CD4-positive, alpha-beta T cell (primary cell): ENCODE measurements at regions of chr6 and their contacts with region 1.

Region 1: GRCh38 chr6:137589067-137589848 is 95.1 kb upstream of the OLIG3 start:
- DNase-seq: peak; percentile 9 to 87 (median 37)
- ATAC-seq: peak; percentile 100
- H3K4me3 ChIP-seq: no peak overlapping the region
- H3K4me3 Mint-ChIP-seq: no peak overlapping the region
- H3K27ac ChIP-seq: no peak overlapping the region
- H3K27ac Mint-ChIP-seq: no peak overlapping the region
- H3K4me1 ChIP-seq: peaks cover 10% of the 10 kb centered on the region
- H3K4me1 Mint-ChIP-seq: peaks cover 7% of the 10 kb centered on the region
- H3K27me3 ChIP-seq: peaks cover 0 to 5% of the 10 kb centered on the region in 2 experiments
- H3K27me3 Mint-ChIP-seq: peaks cover 28% of the 10 kb centered on the region
- CTCF ChIP-seq: peak; percentile 67

Region 2: DNA sequence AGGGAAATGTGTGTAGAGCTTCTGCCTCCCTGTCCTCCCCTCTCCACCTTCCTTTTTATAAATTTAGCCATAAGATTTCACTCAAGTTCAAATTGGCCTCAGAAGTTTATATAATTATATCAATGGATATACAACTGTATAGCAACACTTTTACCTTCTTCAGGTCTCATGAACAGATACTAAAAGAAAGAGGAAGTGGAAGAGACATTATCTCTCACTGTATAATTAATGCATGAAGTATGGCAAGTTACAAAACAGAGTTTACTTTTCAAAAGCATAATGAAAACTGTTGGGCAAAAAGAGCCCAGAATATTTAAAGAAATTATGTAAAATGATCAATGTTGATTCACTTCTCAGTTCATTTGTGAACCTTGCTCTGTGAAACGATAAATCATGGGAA is 1638.1 kb before region 1 on chr6:
- CTCF ChIA-PET with region 1: no interaction called
- POLR2A ChIA-PET with region 1: no interaction called
- intact Hi-C with region 1: no loop called
- DNase-seq: no peak
- ATAC-seq: no peak
- H3K4me3 ChIP-seq: no peak overlapping the region
- H3K4me3 Mint-ChIP-seq: no peak overlapping the region
- H3K27ac ChIP-seq: no peak overlapping the region
- H3K27ac Mint-ChIP-seq: no peak overlapping the region
- H3K4me1 ChIP-seq: no peaks in the 10 kb centered on the region
- H3K4me1 Mint-ChIP-seq: no peaks in the 10 kb centered on the region
- H3K27me3 ChIP-seq: no peaks in the 10 kb centered on the region
- H3K27me3 Mint-ChIP-seq: no peaks in the 10 kb centered on the region
- CTCF ChIP-seq: no peak

Region 3: DNA sequence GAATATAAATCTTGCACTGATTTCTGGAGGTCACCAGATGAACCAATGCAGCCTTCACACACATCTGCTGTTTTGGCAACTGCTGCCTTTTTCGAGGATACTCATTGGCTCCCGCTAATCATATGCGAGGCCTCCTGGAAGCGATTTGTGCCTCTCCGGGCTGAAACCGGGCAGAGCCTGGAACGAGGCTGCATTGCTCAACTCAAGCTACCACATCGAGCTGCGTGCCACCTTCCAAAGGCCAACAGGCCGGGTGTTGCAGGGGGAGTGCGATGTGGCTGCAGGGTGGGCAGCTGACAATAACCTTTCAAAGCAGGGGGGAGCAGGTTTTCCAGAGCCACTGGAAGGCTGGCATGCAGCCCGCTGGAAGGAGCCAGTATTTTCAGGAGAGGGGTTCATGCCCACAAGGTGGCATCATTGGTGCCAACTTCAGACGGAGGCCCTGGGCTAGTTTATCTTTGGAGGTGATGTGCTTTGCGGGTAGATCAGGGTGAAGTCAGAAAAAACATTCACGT is 247.5 kb before region 1 on chr6:
- CTCF ChIA-PET with region 1: no interaction called
- POLR2A ChIA-PET with region 1: no interaction called
- intact Hi-C with region 1: loop called (anchors 2 to 5 kb)
- DNase-seq: peak; percentile 29 to 80 (median 50)
- ATAC-seq: peak; percentile 39
- H3K4me3 ChIP-seq: no peak overlapping the region
- H3K4me3 Mint-ChIP-seq: peak overlapping the region; percentile 81
- H3K27ac ChIP-seq: no peak overlapping the region
- H3K27ac Mint-ChIP-seq: no peak overlapping the region
- H3K4me1 ChIP-seq: peaks cover 12% of the 10 kb centered on the region
- H3K4me1 Mint-ChIP-seq: peaks cover 18% of the 10 kb centered on the region
- H3K27me3 ChIP-seq: peaks cover 0 to 6% of the 10 kb centered on the region in 2 experiments
- H3K27me3 Mint-ChIP-seq: peaks cover 9% of the 10 kb centered on the region
- CTCF ChIP-seq: peak; percentile 72

Region 4: DNA sequence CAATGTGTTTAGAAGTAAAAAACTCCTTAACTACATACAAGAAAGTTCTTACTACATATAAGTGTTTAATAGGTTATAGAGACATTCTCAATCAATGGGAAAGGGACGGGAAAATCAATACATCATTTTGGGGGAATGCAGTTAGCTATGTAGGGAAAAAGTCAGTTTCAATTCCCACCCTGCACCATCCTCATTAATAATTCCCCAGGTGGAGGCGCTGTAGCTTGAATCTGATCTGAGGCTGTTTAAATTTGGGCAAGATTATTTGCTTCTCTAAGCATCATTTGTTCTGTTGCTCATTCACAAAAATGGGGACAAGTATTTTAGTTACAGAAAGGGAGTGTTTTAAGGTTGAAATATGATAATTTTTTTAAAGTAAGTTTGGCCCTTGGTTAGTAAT is 114.2 kb before region 1 on chr6:
- CTCF ChIA-PET with region 1: interaction called, 5 read pairs
- POLR2A ChIA-PET with region 1: interaction called, 3 read pairs
- intact Hi-C with region 1: loop called in 1 of 2 experiments (anchors 1 kb)
- DNase-seq: peak in 3 of 14 experiments; percentile 31 to 38 (median 31)
- ATAC-seq: no peak
- H3K4me3 ChIP-seq: no peak overlapping the region
- H3K4me3 Mint-ChIP-seq: no peak overlapping the region
- H3K27ac ChIP-seq: no peak overlapping the region
- H3K27ac Mint-ChIP-seq: no peak overlapping the region
- H3K4me1 ChIP-seq: no peaks in the 10 kb centered on the region
- H3K4me1 Mint-ChIP-seq: no peaks in the 10 kb centered on the region
- H3K27me3 ChIP-seq: peaks cover 0 to 4% of the 10 kb centered on the region in 2 experiments
- H3K27me3 Mint-ChIP-seq: peaks cover 51% of the 10 kb centered on the region
- CTCF ChIP-seq: peak; percentile 48

Region 5: GRCh38 chr6:137497721-137498463 is 91.4 kb before region 1 on chr6:
- CTCF ChIA-PET with region 1: no interaction called
- POLR2A ChIA-PET with region 1: interaction called, 3 read pairs
- intact Hi-C with region 1: loop called in 1 of 2 experiments (anchors 10 kb)
- DNase-seq: peak in 3 of 14 experiments; percentile 37 to 41 (median 41)
- ATAC-seq: peak; percentile 50
- H3K4me3 ChIP-seq: peak overlapping the region; percentile 20
- H3K4me3 Mint-ChIP-seq: no peak overlapping the region
- H3K27ac ChIP-seq: no peak overlapping the region
- H3K27ac Mint-ChIP-seq: no peak overlapping the region
- H3K4me1 ChIP-seq: peaks cover 55% of the 10 kb centered on the region
- H3K4me1 Mint-ChIP-seq: peaks cover 39% of the 10 kb centered on the region
- H3K27me3 ChIP-seq: peaks cover 59 to 80% of the 10 kb centered on the region in 2 experiments
- H3K27me3 Mint-ChIP-seq: peaks cover 88% of the 10 kb centered on the region
- CTCF ChIP-seq: no peak